ENCODE measurements at regions of chr1 and their contacts with region 1.

Region 1: DNA sequence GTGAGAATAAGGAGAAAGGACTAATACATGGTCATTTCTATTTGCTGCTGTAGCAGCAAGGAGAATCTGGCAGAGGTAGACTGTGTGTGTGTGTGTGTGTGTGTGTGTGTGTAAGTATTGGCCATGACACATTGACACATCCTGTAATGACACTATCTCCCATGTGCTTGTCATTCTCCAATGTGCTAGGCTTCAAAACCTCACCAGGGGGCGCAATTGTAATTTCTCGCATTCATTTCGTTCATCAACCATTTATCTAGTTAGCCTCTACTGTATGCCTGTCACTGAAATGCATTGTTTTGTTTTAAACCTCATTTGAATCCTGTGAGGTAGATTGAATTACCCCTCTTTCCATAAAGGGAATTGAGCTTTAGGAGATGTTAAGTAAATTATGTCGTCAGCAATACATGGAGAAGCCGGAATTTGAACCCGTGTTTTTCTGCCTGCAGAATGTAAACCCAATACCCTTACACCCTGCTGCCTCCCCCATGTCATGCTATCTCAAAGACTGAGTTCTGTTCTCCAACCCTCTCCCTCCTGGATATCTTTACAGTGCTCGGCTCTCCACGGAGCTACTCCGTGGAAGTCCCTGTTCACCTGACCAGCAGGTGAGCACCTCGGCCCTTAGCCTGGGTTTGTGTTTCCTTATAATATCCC is 100.8 kb downstream of the UCK2 start:
- DNase-seq: peak in 1 of 2 experiments; percentile 70
- H3K4me3 ChIP-seq: no peak overlapping the region
- H3K27ac ChIP-seq: no peak overlapping the region
- H3K4me1 ChIP-seq: peaks cover 0 to 2% (median 0%) of the 10 kb centered on the region in 4 experiments; a peak in 1 of 7 replicates
- H3K27me3 ChIP-seq: no peaks in the 10 kb centered on the region
- CTCF ChIP-seq: peak in 2 of 3 experiments; percentile 72 to 82; a peak in 3 of 4 replicates
- EP300 ChIP-seq: no peak
- POLR2A ChIP-seq: no peak
- RAD21 ChIP-seq: peak; percentile 77

Region 2: DNA sequence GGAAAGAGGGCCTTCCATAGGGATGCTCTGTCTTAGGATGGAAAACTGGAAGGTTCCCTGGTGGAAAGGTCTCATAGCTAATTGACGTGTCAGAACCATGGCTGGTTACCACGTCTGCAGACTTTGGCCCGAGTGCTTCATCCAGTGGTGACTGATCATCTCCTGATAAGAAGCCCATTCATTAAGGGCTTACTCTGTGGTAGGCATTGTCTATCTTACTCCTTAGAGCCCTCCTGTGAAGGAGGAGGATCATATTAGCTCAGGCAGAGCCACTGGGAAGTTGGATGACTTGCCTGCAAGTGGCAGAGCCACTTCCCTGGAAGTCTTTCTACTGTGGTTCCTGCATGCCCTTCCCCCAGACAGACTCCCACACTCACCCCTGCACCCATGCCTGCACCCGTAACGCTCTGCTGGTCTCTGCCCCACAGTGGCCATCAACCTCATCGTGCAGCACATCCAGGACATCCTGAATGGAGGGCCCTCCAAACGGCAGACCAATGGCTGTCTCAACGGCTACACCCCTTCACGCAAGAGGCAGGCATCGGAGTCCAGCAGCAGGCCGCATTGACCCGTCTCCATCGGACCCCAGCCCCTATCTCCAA is 20.8 kb before region 1 on chr1:
- CTCF ChIA-PET with region 1: interaction called, 75 read pairs
- POLR2A ChIA-PET with region 1: no interaction called
- DNase-seq: no peak
- H3K4me3 ChIP-seq: no peak overlapping the region
- H3K27ac ChIP-seq: no peak overlapping the region
- H3K4me1 ChIP-seq: no peaks in the 10 kb centered on the region
- H3K27me3 ChIP-seq: no peaks in the 10 kb centered on the region
- CTCF ChIP-seq: no peak
- EP300 ChIP-seq: no peak
- POLR2A ChIP-seq: no peak
- RAD21 ChIP-seq: no peak

Region 3: DNA sequence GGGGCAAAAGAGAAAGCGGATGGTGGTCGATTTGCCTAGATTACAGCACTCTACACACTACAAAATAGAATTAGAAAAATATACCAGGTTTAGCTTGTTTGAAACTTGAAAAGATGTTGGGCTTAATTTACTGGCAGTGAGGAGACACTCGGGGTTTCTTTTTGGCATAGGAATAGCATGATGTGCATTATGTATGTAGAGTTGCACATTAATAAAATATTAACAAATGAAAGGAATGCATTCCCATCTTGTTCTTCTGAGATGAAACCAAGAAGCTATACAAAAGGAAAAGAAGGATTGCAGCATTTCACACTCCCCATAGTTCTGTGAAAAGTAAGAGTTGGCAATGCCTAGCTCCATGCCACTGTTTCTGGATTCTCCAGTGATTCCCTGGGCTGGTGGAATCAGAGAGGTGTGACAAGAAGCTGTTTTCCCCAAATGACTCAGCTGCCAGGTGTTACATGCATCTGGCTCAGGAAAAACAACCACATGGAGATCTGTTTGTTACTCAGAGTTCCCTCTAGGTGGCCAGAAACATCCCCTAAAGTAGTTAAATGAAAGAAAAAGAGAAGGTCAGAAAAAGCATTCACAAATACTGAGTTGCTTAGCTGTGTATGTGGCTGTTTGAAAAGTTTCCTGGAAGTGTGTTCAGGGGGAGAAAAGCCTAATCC is 14.9 kb after region 1 on chr1:
- CTCF ChIA-PET with region 1: interaction called, 32 read pairs
- POLR2A ChIA-PET with region 1: no interaction called
- DNase-seq: no peak
- H3K4me3 ChIP-seq: no peak overlapping the region
- H3K27ac ChIP-seq: no peak overlapping the region
- H3K4me1 ChIP-seq: peaks cover 0 to 10% (median 4%) of the 10 kb centered on the region in 4 experiments; a peak in 2 of 7 replicates
- H3K27me3 ChIP-seq: no peaks in the 10 kb centered on the region; a peak in 1 of 7 replicates
- CTCF ChIP-seq: peak in 2 of 3 experiments; percentile 4 to 31; a peak in 2 of 4 replicates
- EP300 ChIP-seq: no peak
- POLR2A ChIP-seq: no peak
- RAD21 ChIP-seq: peak; percentile 10 to 27; a peak in 2 of 4 replicates

Region 4: DNA sequence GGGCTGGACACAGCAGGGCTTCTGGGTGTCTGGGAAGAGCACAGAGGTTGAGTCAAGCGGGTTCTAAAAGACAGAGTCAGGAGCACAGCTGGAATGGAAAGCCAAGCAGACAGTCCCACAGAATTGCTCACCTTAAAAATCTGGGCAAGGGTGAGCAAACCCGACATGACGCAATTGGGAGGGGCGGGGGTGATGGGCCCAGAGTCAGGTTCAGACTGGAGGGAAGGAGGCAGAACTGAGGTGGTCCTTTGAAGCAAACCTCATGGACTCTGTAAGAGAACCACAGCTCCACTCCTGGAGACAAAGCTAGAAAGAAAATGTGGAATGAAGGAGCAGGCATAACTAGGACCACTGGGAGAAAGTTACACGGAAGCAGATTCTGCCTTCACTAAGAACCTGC is 189.6 kb after region 1 on chr1:
- CTCF ChIA-PET with region 1: interaction called, 13 read pairs
- POLR2A ChIA-PET with region 1: no interaction called
- DNase-seq: no peak
- H3K4me3 ChIP-seq: no peak overlapping the region
- H3K27ac ChIP-seq: no peak overlapping the region
- H3K4me1 ChIP-seq: peaks cover 0 to 2% (median 0%) of the 10 kb centered on the region in 4 experiments; a peak in 3 of 7 replicates
- H3K27me3 ChIP-seq: no peaks in the 10 kb centered on the region
- CTCF ChIP-seq: no peak
- EP300 ChIP-seq: no peak
- POLR2A ChIP-seq: no peak
- RAD21 ChIP-seq: no peak

Measured in H1 (cell line).